H1 (cell line): ENCODE measurements at regions of chr17 and their contacts with region 1.

Region 1: GRCh38 chr17:409848-410545 is 57.4 kb upstream of the RPH3AL start:
- DNase-seq: peak; percentile 100
- H3K4me3 ChIP-seq: peak overlapping the region; percentile 50 to 76 (median 65)
- H3K27ac ChIP-seq: 0 out of 2 replicates have a peak overlapping the region, but pooled peaks have one; percentile 44
- H3K4me1 ChIP-seq: peaks cover 0 to 8% (median 3%) of the 10 kb centered on the region in 4 experiments; a peak in 4 of 7 replicates
- H3K27me3 ChIP-seq: no peaks in the 10 kb centered on the region
- CTCF ChIP-seq: no peak
- EP300 ChIP-seq: no peak
- POLR2A ChIP-seq: peak in 1 of 2 experiments; percentile 47; a peak in 1 of 3 replicates
- RAD21 ChIP-seq: 0 out of 4 replicates have a peak, but pooled peaks of 1 of the 2 experiments have one; percentile 0

Region 2: GRCh38 chr17:333626-334396 is 76.2 kb before region 1 on chr17:
- CTCF ChIA-PET with region 1: no interaction called
- POLR2A ChIA-PET with region 1: no interaction called
- DNase-seq: peak in 1 of 2 experiments; percentile 69
- H3K4me3 ChIP-seq: no peak overlapping the region
- H3K27ac ChIP-seq: no peak overlapping the region; the same call in 1 of the 2 replicates
- H3K4me1 ChIP-seq: peaks cover 6 to 28% (median 20%) of the 10 kb centered on the region in 4 experiments
- H3K27me3 ChIP-seq: 0 out of 7 replicates have a peak, but pooled peaks cover 0 to 3% (median 0%) of the 10 kb centered on the region in 4 experiments
- CTCF ChIP-seq: no peak
- EP300 ChIP-seq: no peak
- POLR2A ChIP-seq: no peak
- RAD21 ChIP-seq: no peak

Region 3: GRCh38 chr17:422196-422930 is 12.4 kb after region 1 on chr17:
- CTCF ChIA-PET with region 1: interaction called, 18 read pairs
- POLR2A ChIA-PET with region 1: interaction called, 4 read pairs
- DNase-seq: no peak
- H3K4me3 ChIP-seq: no peak overlapping the region
- H3K27ac ChIP-seq: no peak overlapping the region
- H3K4me1 ChIP-seq: peaks cover 2 to 8% (median 4%) of the 10 kb centered on the region in 4 experiments
- H3K27me3 ChIP-seq: no peaks in the 10 kb centered on the region
- CTCF ChIP-seq: no peak
- EP300 ChIP-seq: no peak
- POLR2A ChIP-seq: no peak
- RAD21 ChIP-seq: no peak

Region 4: GRCh38 chr17:441150-441549 is 31.2 kb after region 1 on chr17:
- CTCF ChIA-PET with region 1: interaction called, 12 read pairs
- POLR2A ChIA-PET with region 1: no interaction called
- DNase-seq: no peak
- H3K4me3 ChIP-seq: no peak overlapping the region
- H3K27ac ChIP-seq: no peak overlapping the region
- H3K4me1 ChIP-seq: no peaks in the 10 kb centered on the region
- H3K27me3 ChIP-seq: no peaks in the 10 kb centered on the region
- CTCF ChIP-seq: no peak
- EP300 ChIP-seq: no peak
- POLR2A ChIP-seq: no peak
- RAD21 ChIP-seq: no peak

Region 5: DNA sequence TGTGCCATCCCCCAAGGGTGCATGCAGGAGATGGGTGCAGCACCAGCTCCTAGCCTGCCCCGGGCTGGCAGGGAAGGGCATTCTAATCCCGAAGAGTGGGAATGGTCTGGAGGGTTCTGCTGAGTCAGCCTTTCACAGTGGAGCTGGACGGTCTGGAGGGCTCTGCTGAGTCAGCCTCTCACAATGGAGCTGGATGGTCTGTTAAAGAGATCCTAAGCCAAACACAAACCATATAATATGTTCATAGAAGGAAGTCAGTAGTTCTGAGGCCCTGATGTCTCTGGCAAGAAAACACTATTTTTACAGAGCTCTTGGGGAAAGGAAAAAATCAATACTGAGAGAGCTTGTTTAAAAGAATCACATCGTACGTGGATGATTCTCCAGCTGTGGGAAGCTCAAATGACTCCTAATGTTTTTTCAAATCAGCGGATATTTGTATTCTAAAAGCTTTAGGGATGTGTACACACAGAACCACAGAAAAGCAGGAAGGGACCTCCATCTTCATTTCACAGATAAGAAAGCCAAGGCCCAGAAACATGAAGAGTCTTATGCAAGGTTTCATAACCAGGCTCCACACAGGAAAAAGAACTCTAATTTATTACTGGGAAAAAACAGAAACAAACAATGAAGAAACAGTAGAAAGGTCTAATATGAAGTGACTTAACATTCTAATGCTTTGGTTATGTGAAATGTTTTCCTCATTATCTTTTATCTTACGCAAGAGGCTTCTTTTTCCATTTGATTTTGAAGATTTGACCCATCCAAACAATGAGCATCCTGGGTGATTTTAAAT is 128.4 kb after region 1 on chr17:
- CTCF ChIA-PET with region 1: interaction called, 18 read pairs
- POLR2A ChIA-PET with region 1: no interaction called
- DNase-seq: no peak
- H3K4me3 ChIP-seq: no peak overlapping the region
- H3K27ac ChIP-seq: no peak overlapping the region
- H3K4me1 ChIP-seq: peaks cover 0 to 13% (median 3%) of the 10 kb centered on the region in 4 experiments; a peak in 5 of 7 replicates
- H3K27me3 ChIP-seq: no peaks in the 10 kb centered on the region
- CTCF ChIP-seq: no peak
- EP300 ChIP-seq: no peak
- POLR2A ChIP-seq: no peak
- RAD21 ChIP-seq: no peak

Region 6: GRCh38 chr17:700504-701094 is 290.6 kb after region 1 on chr17:
- CTCF ChIA-PET with region 1: interaction called, 73 read pairs
- POLR2A ChIA-PET with region 1: no interaction called
- DNase-seq: no peak
- H3K4me3 ChIP-seq: no peak overlapping the region
- H3K27ac ChIP-seq: no peak overlapping the region
- H3K4me1 ChIP-seq: no peaks in the 10 kb centered on the region
- H3K27me3 ChIP-seq: no peaks in the 10 kb centered on the region
- CTCF ChIP-seq: peak in 2 of 3 experiments; percentile 8 to 25; a peak in 2 of 4 replicates
- EP300 ChIP-seq: no peak
- POLR2A ChIP-seq: no peak
- RAD21 ChIP-seq: peak in 1 of 2 experiments; percentile 68; a peak in 3 of 4 replicates